ENCODE measurements at regions of chr12 and their contacts with region 1.

Region 1: GRCh38 chr12:118135788-118136558 is at the start of gene PEBP1:
- DNase-seq: peak; percentile 97
- ATAC-seq: peak; percentile 99
- H3K4me3 Mint-ChIP-seq: peak within 1 kb of the TSS; percentile 88
- H3K27ac Mint-ChIP-seq: peak within 1 kb of the TSS; percentile 91
- H3K4me1 Mint-ChIP-seq: peaks cover 33% of the 10 kb centered on the region
- H3K27me3 Mint-ChIP-seq: no peaks in the 10 kb centered on the region
- total RNA-seq, gene PEBP1: 117 to 134 TPM

Region 2: DNA sequence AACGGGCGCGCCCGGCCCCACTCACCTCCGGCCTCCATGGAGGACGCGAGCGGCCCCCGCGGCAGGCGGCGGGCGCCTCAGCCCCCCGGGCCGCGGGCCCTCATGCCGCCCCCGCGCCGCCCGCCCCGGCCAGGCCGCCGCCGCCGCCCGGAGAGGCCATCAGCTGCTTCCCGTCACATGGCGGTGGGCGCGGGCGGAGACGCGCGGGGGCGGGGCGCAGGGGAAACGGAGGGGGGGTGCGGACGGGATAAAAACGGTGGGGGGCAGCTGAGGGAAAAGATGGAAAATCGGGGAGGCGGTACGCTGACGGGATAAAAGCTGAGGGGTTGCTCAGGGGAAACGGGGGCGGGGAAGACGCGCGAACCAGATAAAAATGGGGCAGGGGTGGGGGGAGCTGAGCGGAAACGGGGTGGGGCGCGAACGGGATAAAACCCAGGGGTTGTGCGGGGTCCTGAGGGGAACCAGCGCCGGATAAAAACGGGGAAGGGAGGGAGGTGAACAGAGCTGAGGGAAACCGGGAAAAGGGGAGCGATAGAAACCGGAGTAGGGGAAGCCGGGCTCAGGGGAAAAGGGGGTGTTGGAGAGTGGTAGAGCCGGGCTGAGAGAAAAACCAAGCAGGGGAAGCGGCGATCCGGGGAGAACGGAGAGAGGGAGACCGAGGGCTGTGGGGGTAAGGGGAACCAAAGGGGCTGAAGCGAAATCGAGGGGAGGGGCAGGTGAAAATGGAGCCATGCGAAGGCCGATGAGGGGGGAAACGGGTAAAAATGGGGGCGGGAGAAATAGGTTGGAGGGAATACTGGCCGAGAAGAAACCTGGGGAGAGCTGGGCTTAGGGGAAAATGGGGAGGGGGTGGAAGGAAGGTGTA is 74.7 kb before region 1 on chr12 and contains the start of gene WSB2:
- CTCF ChIA-PET with region 1: interaction called, 4 read pairs
- POLR2A ChIA-PET with region 1: no interaction called
- intact Hi-C with region 1: loop called (anchors 1 to 5 kb)
- DNase-seq: peak; percentile 73
- ATAC-seq: peak; percentile 8
- H3K4me3 Mint-ChIP-seq: peak within 1 kb of the TSS; percentile 88
- H3K27ac Mint-ChIP-seq: peak within 1 kb of the TSS; percentile 97
- H3K4me1 Mint-ChIP-seq: peaks cover 47% of the 10 kb centered on the region
- H3K27me3 Mint-ChIP-seq: peaks cover 2% of the 10 kb centered on the region
- total RNA-seq, gene WSB2: 57.7 to 58.2 TPM

Region 3: GRCh38 chr12:118164798-118165486 is 29.0 kb after region 1 on chr12:
- CTCF ChIA-PET with region 1: interaction called, 3 read pairs
- POLR2A ChIA-PET with region 1: no interaction called
- intact Hi-C with region 1: loop called (anchors 1 to 2 kb)
- DNase-seq: peak; percentile 49
- ATAC-seq: no peak
- H3K4me3 Mint-ChIP-seq: no peak overlapping the region
- H3K27ac Mint-ChIP-seq: no peak overlapping the region
- H3K4me1 Mint-ChIP-seq: peaks cover 37% of the 10 kb centered on the region
- H3K27me3 Mint-ChIP-seq: no peaks in the 10 kb centered on the region

Region 4: DNA sequence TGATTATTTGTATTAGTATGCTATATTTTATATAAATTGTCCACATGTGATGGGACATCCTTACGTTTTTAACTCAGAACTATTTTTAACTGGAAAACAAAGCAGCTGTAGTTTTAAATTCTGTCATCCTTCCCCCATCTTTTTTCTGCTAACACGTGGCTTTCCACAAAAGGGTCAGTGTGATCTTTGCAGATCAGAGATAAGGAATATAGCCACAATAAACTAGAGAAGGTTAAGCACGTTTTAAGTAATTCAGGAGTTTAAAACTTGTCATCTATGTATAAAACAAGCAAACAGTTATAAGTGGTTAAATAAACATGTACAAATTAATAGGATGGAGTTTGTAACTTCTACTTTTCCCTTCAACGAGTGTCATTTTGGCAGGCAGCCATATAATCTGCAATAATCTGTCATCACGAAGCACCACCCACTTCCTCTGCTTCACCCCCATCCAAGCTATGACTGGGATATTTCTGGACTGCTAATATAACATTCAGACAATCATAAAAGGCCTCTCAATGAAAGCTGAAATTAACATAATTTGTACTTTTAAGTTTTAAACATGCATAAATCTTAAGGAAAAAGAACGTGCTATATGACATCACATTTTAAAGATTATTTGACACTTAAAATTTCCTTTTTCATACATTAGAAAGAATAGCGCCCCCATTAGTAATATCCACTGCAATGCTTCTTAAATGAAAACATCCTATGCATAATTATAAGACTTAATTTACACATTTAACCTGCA is 221.5 kb after region 1 on chr12:
- CTCF ChIA-PET with region 1: interaction called, 6 read pairs
- POLR2A ChIA-PET with region 1: interaction called, 3 read pairs
- intact Hi-C with region 1: loop called (anchors 5 kb)
- DNase-seq: peak; percentile 72
- ATAC-seq: peak; percentile 74
- H3K4me3 Mint-ChIP-seq: peak overlapping the region; percentile 83
- H3K27ac Mint-ChIP-seq: peak overlapping the region; percentile 95
- H3K4me1 Mint-ChIP-seq: peaks cover 49% of the 10 kb centered on the region
- H3K27me3 Mint-ChIP-seq: no peaks in the 10 kb centered on the region

Measured in activated CD4-positive, alpha-beta T cell treated with anti-CD3 and anti-CD28 coated beads for 36 hours (primary cell).